B cell (primary cell): ENCODE measurements at regions of chr4 and their contacts with region 1.

Region 1: DNA sequence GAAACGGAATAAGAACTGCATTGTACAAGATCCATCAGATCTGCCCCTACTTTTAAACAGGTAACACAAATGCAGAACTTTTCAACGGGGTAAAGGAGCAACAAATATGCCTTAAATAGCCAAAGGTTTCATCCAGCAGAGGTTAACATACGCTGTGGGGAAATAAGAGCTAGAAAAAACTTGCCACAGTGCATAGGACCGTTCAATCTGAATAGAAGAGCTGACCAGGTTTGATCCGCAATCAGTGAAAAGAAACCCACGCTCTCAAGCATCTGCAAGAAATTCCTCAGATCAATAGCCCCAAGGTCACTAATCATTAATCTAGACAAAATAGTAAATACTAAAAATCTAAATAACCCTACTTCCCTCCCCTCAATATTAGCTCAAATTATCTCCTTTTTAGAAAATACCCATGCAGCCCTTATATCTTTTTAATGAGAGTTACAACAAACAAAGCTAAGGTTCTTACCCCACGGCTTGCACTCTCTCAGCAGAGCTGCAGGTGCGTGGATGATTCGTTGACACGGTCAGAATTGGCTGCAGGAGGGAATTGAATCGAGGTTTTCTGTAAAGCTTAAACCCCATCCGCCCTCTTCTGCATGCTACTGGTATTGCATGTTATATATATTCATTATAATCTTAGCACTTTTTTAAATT is at the start of gene TLR10:
- DNase-seq: peak; percentile 88
- ATAC-seq: peak; percentile 90
- H3K4me3 ChIP-seq: peak within 1 kb of the TSS; percentile 50 to 92 (median 72)
- H3K4me3 Mint-ChIP-seq: peak within 1 kb of the TSS; percentile 95
- H3K27ac ChIP-seq: peak within 1 kb of the TSS; percentile 78 to 83
- H3K27ac Mint-ChIP-seq: peak within 1 kb of the TSS; percentile 96
- H3K4me1 ChIP-seq: peaks cover 34 to 51% of the 10 kb centered on the region in 2 donors
- H3K4me1 Mint-ChIP-seq: peaks cover 57% of the 10 kb centered on the region
- H3K27me3 ChIP-seq: no peaks in the 10 kb centered on the region
- H3K27me3 Mint-ChIP-seq: no peaks in the 10 kb centered on the region
- CTCF ChIP-seq: peak; percentile 83
- total RNA-seq, gene TLR10: 51.5 and 53.4 TPM in 2 replicates

Region 2: GRCh38 chr4:38334810-38335537 is 447.6 kb before region 1 on chr4:
- CTCF ChIA-PET with region 1: no interaction called
- POLR2A ChIA-PET with region 1: no interaction called
- intact Hi-C with region 1: no loop called
- DNase-seq: no peak
- ATAC-seq: no peak
- H3K4me3 ChIP-seq: no peak overlapping the region
- H3K4me3 Mint-ChIP-seq: no peak overlapping the region
- H3K27ac ChIP-seq: no peak overlapping the region
- H3K27ac Mint-ChIP-seq: no peak overlapping the region
- H3K4me1 ChIP-seq: peaks cover 0 to 5% of the 10 kb centered on the region in 2 donors
- H3K4me1 Mint-ChIP-seq: peaks cover 9% of the 10 kb centered on the region
- H3K27me3 ChIP-seq: no peaks in the 10 kb centered on the region
- H3K27me3 Mint-ChIP-seq: peaks cover 16% of the 10 kb centered on the region
- CTCF ChIP-seq: no peak

Region 3: GRCh38 chr4:38730830-38731646 is 51.5 kb before region 1 on chr4:
- CTCF ChIA-PET with region 1: interaction called, 7 read pairs
- POLR2A ChIA-PET with region 1: no interaction called
- intact Hi-C with region 1: loop called (anchors 2 kb)
- DNase-seq: peak; percentile 88
- ATAC-seq: peak; percentile 83
- H3K4me3 ChIP-seq: peak overlapping the region in 1 of 5 experiments; percentile 10
- H3K4me3 Mint-ChIP-seq: peak overlapping the region; percentile 69
- H3K27ac ChIP-seq: peak overlapping the region; percentile 32 to 40
- H3K27ac Mint-ChIP-seq: peak overlapping the region; percentile 75
- H3K4me1 ChIP-seq: peaks cover 13 to 27% of the 10 kb centered on the region in 2 donors
- H3K4me1 Mint-ChIP-seq: peaks cover 33% of the 10 kb centered on the region
- H3K27me3 ChIP-seq: no peaks in the 10 kb centered on the region
- H3K27me3 Mint-ChIP-seq: no peaks in the 10 kb centered on the region
- CTCF ChIP-seq: peak; percentile 92

Region 4: GRCh38 chr4:38804654-38805295 is 22.2 kb after region 1 on chr4 and contains the start of gene TLR1:
- CTCF ChIA-PET with region 1: interaction called, 134 read pairs
- POLR2A ChIA-PET with region 1: interaction called, 10 read pairs
- intact Hi-C with region 1: loop called (anchors 1 kb)
- DNase-seq: peak; percentile 85
- ATAC-seq: peak; percentile 52
- H3K4me3 ChIP-seq: peak within 1 kb of the TSS; percentile 57 to 97 (median 70)
- H3K4me3 Mint-ChIP-seq: peak within 1 kb of the TSS; percentile 80
- H3K27ac ChIP-seq: peak within 1 kb of the TSS; percentile 72 to 97
- H3K27ac Mint-ChIP-seq: peak within 1 kb of the TSS; percentile 95
- H3K4me1 ChIP-seq: peaks cover 32 to 45% of the 10 kb centered on the region in 2 donors
- H3K4me1 Mint-ChIP-seq: peaks cover 56% of the 10 kb centered on the region
- H3K27me3 ChIP-seq: no peaks in the 10 kb centered on the region
- H3K27me3 Mint-ChIP-seq: no peaks in the 10 kb centered on the region
- CTCF ChIP-seq: peak; percentile 75
- total RNA-seq, gene TLR1: 50.8 and 54.1 TPM in 2 replicates

Region 5: GRCh38 chr4:38856524-38857337 is 74.2 kb after region 1 on chr4 and contains the start of gene TLR6:
- CTCF ChIA-PET with region 1: interaction called, 70 read pairs
- POLR2A ChIA-PET with region 1: interaction called, 5 read pairs
- intact Hi-C with region 1: loop called (anchors 1 kb)
- DNase-seq: peak; percentile 87
- ATAC-seq: peak; percentile 56
- H3K4me3 ChIP-seq: peak within 1 kb of the TSS; percentile 51 to 78 (median 70)
- H3K4me3 Mint-ChIP-seq: peak within 1 kb of the TSS; percentile 93
- H3K27ac ChIP-seq: peak within 1 kb of the TSS; percentile 73 to 77
- H3K27ac Mint-ChIP-seq: peak within 1 kb of the TSS; percentile 94
- H3K4me1 ChIP-seq: peaks cover 39 to 43% of the 10 kb centered on the region in 2 donors
- H3K4me1 Mint-ChIP-seq: peaks cover 52% of the 10 kb centered on the region
- H3K27me3 ChIP-seq: no peaks in the 10 kb centered on the region
- H3K27me3 Mint-ChIP-seq: no peaks in the 10 kb centered on the region
- CTCF ChIP-seq: peak; percentile 87
- total RNA-seq, gene TLR6: 54.4 and 60.6 TPM in 2 replicates

Region 6: GRCh38 chr4:38958453-38959190 is 176.0 kb after region 1 on chr4:
- CTCF ChIA-PET with region 1: no interaction called
- POLR2A ChIA-PET with region 1: no interaction called
- intact Hi-C with region 1: no loop called
- DNase-seq: no peak
- ATAC-seq: no peak
- H3K4me3 ChIP-seq: no peak overlapping the region
- H3K4me3 Mint-ChIP-seq: no peak overlapping the region
- H3K27ac ChIP-seq: no peak overlapping the region
- H3K27ac Mint-ChIP-seq: no peak overlapping the region
- H3K4me1 ChIP-seq: peaks cover 0 to 5% of the 10 kb centered on the region in 2 donors
- H3K4me1 Mint-ChIP-seq: peaks cover 10% of the 10 kb centered on the region
- H3K27me3 ChIP-seq: no peaks in the 10 kb centered on the region
- H3K27me3 Mint-ChIP-seq: no peaks in the 10 kb centered on the region
- CTCF ChIP-seq: no peak